ENCODE measurements at regions of chr14 and their contacts with region 1.

Region 1: GRCh38 chr14:73491256-73492042 is 716 bp downstream of the RIOX1 start:
- DNase-seq: peak; percentile 69 to 84 (median 74)
- H3K4me3 ChIP-seq: peak overlapping the region; percentile 81 to 96
- H3K4me3 Mint-ChIP-seq: peak overlapping the region; percentile 87 to 94 (median 89)
- H3K27ac ChIP-seq: peak overlapping the region; percentile 83
- H3K27ac Mint-ChIP-seq: peak overlapping the region; percentile 86 to 96 (median 92)
- H3K4me1 ChIP-seq: peaks cover 45% of the 10 kb centered on the region
- H3K4me1 Mint-ChIP-seq: peaks cover 31 to 58% (median 44%) of the 10 kb centered on the region in 4 donors
- H3K27me3 ChIP-seq: no peaks in the 10 kb centered on the region
- H3K27me3 Mint-ChIP-seq: peaks cover 0 to 2% of the 10 kb centered on the region in 2 donors

Region 2: GRCh38 chr14:73458151-73458976 is 33.1 kb before region 1 on chr14 and contains the start of gene NUMB:
- CTCF ChIA-PET with region 1: interaction called, 5 read pairs
- POLR2A ChIA-PET with region 1: interaction called, 45 read pairs
- intact Hi-C with region 1: loop called (anchors 1 kb)
- DNase-seq: peak; percentile 97 to 99 (median 98)
- H3K4me3 ChIP-seq: peak within 1 kb of the TSS; percentile 58 to 75
- H3K4me3 Mint-ChIP-seq: peak within 1 kb of the TSS; percentile 95 to 100 (median 98)
- H3K27ac ChIP-seq: peak within 1 kb of the TSS; percentile 86
- H3K27ac Mint-ChIP-seq: peak within 1 kb of the TSS; percentile 77 to 99 (median 97)
- H3K4me1 ChIP-seq: peaks cover 41% of the 10 kb centered on the region
- H3K4me1 Mint-ChIP-seq: peaks cover 25 to 46% (median 34%) of the 10 kb centered on the region in 4 donors
- H3K27me3 ChIP-seq: no peaks in the 10 kb centered on the region
- H3K27me3 Mint-ChIP-seq: no peaks in the 10 kb centered on the region
- total RNA-seq, gene NUMB: 45.3 to 47.3 TPM

Region 3: DNA sequence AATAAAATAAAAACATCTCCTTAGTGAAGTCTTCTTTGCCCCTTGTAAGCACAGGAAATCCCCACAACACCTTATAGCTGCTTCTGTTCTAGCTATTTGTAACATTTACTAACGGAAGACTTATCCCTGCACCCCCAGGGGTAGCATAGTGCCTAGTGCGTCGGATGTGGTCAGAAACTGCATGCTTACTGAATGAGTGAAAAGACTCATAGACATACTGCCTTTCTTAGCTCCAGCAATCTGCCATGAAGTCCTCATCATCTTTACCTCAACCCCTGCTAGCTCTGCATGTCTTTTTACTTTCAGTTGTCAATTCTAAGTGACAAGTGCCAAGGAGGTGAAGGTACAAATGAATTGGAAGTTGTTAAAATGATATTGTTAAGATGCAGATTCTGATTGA is 12.2 kb after region 1 on chr14:
- CTCF ChIA-PET with region 1: interaction called, 7 read pairs
- POLR2A ChIA-PET with region 1: interaction called, 18 read pairs
- intact Hi-C with region 1: no loop called
- DNase-seq: no peak
- H3K4me3 ChIP-seq: no peak overlapping the region
- H3K4me3 Mint-ChIP-seq: no peak overlapping the region
- H3K27ac ChIP-seq: no peak overlapping the region
- H3K27ac Mint-ChIP-seq: no peak overlapping the region
- H3K4me1 ChIP-seq: no peaks in the 10 kb centered on the region
- H3K4me1 Mint-ChIP-seq: peaks cover 0 to 11% (median 1%) of the 10 kb centered on the region in 4 donors
- H3K27me3 ChIP-seq: no peaks in the 10 kb centered on the region
- H3K27me3 Mint-ChIP-seq: no peaks in the 10 kb centered on the region

Region 4: GRCh38 chr14:73553845-73554244 is 62.4 kb after region 1 on chr14:
- CTCF ChIA-PET with region 1: no interaction called
- POLR2A ChIA-PET with region 1: no interaction called
- intact Hi-C with region 1: no loop called
- DNase-seq: no peak
- H3K4me3 ChIP-seq: no peak overlapping the region
- H3K4me3 Mint-ChIP-seq: no peak overlapping the region
- H3K27ac ChIP-seq: no peak overlapping the region
- H3K27ac Mint-ChIP-seq: no peak overlapping the region
- H3K4me1 ChIP-seq: no peaks in the 10 kb centered on the region
- H3K4me1 Mint-ChIP-seq: no peaks in the 10 kb centered on the region
- H3K27me3 ChIP-seq: no peaks in the 10 kb centered on the region
- H3K27me3 Mint-ChIP-seq: no peaks in the 10 kb centered on the region

Region 5: GRCh38 chr14:73591690-73592448 is 100.4 kb after region 1 on chr14 and contains the start of gene ACOT4:
- CTCF ChIA-PET with region 1: no interaction called
- POLR2A ChIA-PET with region 1: interaction called, 13 read pairs
- intact Hi-C with region 1: no loop called
- DNase-seq: peak; percentile 64 to 76 (median 76)
- H3K4me3 ChIP-seq: peak within 1 kb of the TSS; percentile 63 to 77
- H3K4me3 Mint-ChIP-seq: peak within 1 kb of the TSS; percentile 73 to 87 (median 82)
- H3K27ac ChIP-seq: peak within 1 kb of the TSS; percentile 53
- H3K27ac Mint-ChIP-seq: peak within 1 kb of the TSS; percentile 30 to 92 (median 81)
- H3K4me1 ChIP-seq: peaks cover 10% of the 10 kb centered on the region
- H3K4me1 Mint-ChIP-seq: peaks cover 5 to 10% (median 7%) of the 10 kb centered on the region in 4 donors
- H3K27me3 ChIP-seq: no peaks in the 10 kb centered on the region
- H3K27me3 Mint-ChIP-seq: no peaks in the 10 kb centered on the region
- total RNA-seq, gene ACOT4: 1.2 to 1.5 TPM

Region 6: DNA sequence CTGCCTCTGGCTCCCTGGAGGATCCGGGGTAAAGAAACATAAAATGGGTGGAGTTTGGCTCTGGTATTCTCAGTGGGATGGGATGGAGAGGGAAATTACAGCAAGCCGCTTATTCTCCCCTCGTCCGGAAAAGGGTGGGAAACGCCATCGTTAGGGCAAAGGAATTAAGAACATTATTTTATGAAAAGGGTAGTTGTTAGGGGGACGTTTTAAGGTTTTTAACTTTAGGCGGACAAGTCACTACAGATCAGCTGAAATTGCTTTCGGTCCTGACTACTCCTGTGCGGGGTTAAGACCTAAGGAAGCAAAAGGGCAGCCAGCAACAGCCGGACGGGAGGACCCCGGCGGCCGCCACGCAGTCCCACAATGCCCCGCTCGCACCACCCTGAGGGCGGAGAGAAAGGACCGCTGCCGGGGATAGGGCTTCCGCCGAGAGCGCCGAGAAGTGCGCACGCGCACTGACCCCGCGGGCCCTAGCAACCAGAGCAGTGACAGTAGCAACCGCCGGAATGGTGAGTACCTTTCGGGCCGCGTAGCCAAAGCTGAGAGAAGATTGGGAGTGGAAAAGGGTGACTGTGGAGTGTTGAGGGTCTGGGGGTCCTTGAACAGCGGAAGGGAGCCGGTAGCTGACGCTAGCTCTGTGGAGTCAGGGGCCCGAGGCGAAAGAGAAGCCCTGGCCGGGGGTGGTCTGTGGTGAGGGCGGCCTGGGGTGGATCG is 153.2 kb after region 1 on chr14 and contains the start of gene DNAL1:
- CTCF ChIA-PET with region 1: no interaction called
- POLR2A ChIA-PET with region 1: interaction called, 10 read pairs
- intact Hi-C with region 1: no loop called
- DNase-seq: peak; percentile 88 to 90 (median 89)
- H3K4me3 ChIP-seq: peak within 1 kb of the TSS; percentile 73 to 81
- H3K4me3 Mint-ChIP-seq: peak within 1 kb of the TSS; percentile 89 to 99 (median 95)
- H3K27ac ChIP-seq: peak within 1 kb of the TSS; percentile 64
- H3K27ac Mint-ChIP-seq: peak within 1 kb of the TSS; percentile 76 to 97 (median 97)
- H3K4me1 ChIP-seq: peaks cover 11% of the 10 kb centered on the region
- H3K4me1 Mint-ChIP-seq: peaks cover 11 to 19% (median 17%) of the 10 kb centered on the region in 4 donors
- H3K27me3 ChIP-seq: no peaks in the 10 kb centered on the region
- H3K27me3 Mint-ChIP-seq: no peaks in the 10 kb centered on the region
- total RNA-seq, gene DNAL1: 5.4 to 7.8 TPM

Region 7: DNA sequence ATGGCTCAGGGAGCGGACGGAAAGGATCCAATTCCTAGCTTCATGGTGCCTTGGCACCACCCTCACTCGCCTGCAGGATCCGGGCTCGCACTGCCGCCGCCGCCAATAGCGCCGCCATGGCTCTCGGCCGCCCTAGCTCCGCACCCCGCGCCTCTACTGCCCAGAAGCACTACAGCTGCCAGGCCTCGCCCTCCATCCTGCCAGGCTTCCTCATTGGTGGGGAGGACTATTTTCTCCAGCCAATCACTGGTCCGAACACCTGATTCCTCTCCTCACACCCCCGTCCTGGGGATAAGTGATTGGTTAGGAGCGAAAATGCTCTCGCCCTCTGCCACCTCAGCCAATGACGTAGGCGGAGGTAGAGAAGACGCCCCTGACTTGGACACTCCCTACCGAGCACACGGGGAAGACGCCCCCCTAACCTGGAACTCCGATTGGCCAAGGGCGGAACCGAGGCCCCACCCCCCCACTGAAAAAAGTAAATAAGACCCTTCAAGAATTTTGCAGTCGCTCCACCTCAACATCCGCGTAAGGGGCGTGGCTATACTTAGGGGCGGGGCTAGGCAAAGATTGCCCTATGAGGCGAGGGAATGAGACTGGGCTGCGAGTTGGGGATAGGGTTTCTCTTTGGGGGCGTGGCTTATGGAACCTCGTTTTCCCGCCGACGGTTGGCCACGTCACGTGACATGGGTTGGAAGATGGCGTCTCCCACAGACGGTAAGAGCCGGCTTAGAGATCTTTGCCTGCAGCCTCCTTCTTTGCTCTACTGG is 593.0 kb after region 1 on chr14 and contains the starts of genes ALDH6A1 and LIN52:
- CTCF ChIA-PET with region 1: no interaction called
- POLR2A ChIA-PET with region 1: interaction called, 6 read pairs
- intact Hi-C with region 1: loop called (anchors 1 kb)
- DNase-seq: peak; percentile 99 to 100 (median 100)
- H3K4me3 ChIP-seq: peak within 1 kb of the TSS; percentile 68 to 86
- H3K4me3 Mint-ChIP-seq: peak within 1 kb of the TSS; percentile 95 to 99 (median 98)
- H3K27ac ChIP-seq: peak within 1 kb of the TSS; percentile 60
- H3K27ac Mint-ChIP-seq: peak within 1 kb of the TSS; percentile 90 to 99 (median 96)
- H3K4me1 ChIP-seq: peaks cover 25% of the 10 kb centered on the region
- H3K4me1 Mint-ChIP-seq: peaks cover 20 to 48% (median 33%) of the 10 kb centered on the region in 4 donors
- H3K27me3 ChIP-seq: no peaks in the 10 kb centered on the region
- H3K27me3 Mint-ChIP-seq: no peaks in the 10 kb centered on the region
- total RNA-seq, gene ALDH6A1: 21.7 to 22.5 TPM
- total RNA-seq, gene LIN52: 9.4 to 11.0 TPM

Region 8: GRCh38 chr14:74155287-74155686 is 663.8 kb after region 1 on chr14:
- CTCF ChIA-PET with region 1: no interaction called
- POLR2A ChIA-PET with region 1: no interaction called
- intact Hi-C with region 1: no loop called
- DNase-seq: no peak
- H3K4me3 ChIP-seq: no peak overlapping the region
- H3K4me3 Mint-ChIP-seq: no peak overlapping the region
- H3K27ac ChIP-seq: no peak overlapping the region
- H3K27ac Mint-ChIP-seq: peak overlapping the region in 1 of 7 donors; percentile 19
- H3K4me1 ChIP-seq: no peaks in the 10 kb centered on the region
- H3K4me1 Mint-ChIP-seq: peaks cover 0 to 1% (median 0%) of the 10 kb centered on the region in 4 donors
- H3K27me3 ChIP-seq: no peaks in the 10 kb centered on the region
- H3K27me3 Mint-ChIP-seq: no peaks in the 10 kb centered on the region